ENCODE measurements at regions of chr14 and their contacts with region 1.

Region 1: DNA sequence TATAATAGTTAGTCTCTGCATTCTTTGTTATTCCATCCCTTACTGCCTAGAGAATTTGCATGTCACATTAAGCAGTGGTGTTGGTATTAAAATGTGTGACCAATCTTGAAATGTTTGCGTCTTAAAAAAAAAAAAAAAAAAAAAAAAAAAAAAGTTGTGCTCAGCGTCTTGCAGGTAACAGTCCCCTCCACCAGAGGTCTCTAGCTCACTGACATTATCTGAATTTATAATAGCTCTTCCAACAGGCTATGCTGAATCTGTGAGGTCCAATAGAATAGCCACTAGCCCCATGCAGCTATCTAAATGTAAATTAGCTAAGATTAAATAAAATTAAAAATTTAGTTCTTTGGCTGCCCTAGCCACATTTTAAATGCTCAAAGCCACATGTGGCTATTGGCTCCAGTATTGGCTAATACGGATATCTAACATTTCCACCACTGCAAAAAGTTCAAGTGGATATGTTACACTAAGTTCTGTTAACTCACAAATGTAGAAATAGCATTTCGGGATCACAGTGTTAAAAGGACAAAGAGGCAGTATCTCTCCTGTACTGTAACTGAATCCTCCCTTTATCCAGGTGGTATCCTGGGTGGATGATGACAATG is 28.7 kb downstream of the NKX2-8 start:
- DNase-seq: peak; percentile 65
- ATAC-seq: peak; percentile 79
- H3K4me3 ChIP-seq: no peak overlapping the region
- H3K27ac ChIP-seq: no peak overlapping the region
- H3K4me1 ChIP-seq: peaks cover 9% of the 10 kb centered on the region
- H3K27me3 ChIP-seq: peaks cover 0 to 15% of the 10 kb centered on the region in 2 experiments; a peak in 2 of 5 replicates
- CTCF ChIP-seq: peak; percentile 72
- EP300 ChIP-seq: no peak
- POLR2A ChIP-seq: no peak
- RAD21 ChIP-seq: peak; percentile 55

Region 2: DNA sequence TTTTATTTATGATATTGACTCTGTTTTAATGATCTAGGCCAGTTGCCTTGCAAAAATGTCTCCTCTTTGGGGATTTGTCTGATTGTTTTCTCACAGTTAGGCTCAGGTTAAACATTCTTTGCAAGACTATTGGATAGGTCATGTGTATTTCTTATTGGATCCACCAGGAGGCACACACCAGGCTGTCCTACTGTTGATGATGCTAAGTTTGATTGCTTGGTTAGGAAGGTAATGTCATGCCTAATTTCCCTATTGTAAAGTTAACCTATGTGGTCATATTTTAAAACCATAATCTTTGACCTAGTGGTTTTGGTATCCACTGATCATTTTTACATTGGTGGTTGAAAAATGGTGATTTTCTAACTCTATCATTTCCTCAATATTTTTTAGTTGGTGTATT is 590.5 kb before region 1 on chr14:
- CTCF ChIA-PET with region 1: no interaction called
- POLR2A ChIA-PET with region 1: no interaction called
- in situ Hi-C with region 1: no loop called
- intact Hi-C with region 1: loop called (anchors 5 kb)
- DNase-seq: peak; percentile 45
- ATAC-seq: peak; percentile 93
- H3K4me3 ChIP-seq: no peak overlapping the region
- H3K27ac ChIP-seq: no peak overlapping the region
- H3K4me1 ChIP-seq: no peaks in the 10 kb centered on the region
- H3K27me3 ChIP-seq: peaks cover 0 to 3% of the 10 kb centered on the region in 2 experiments; a peak in 1 of 5 replicates
- CTCF ChIP-seq: peak; percentile 48
- EP300 ChIP-seq: no peak
- POLR2A ChIP-seq: no peak
- RAD21 ChIP-seq: no peak

Region 3: GRCh38 chr14:36356862-36357261 is 196.9 kb before region 1 on chr14:
- CTCF ChIA-PET with region 1: no interaction called
- POLR2A ChIA-PET with region 1: no interaction called
- in situ Hi-C with region 1: no loop called
- intact Hi-C with region 1: no loop called
- DNase-seq: no peak
- ATAC-seq: no peak
- H3K4me3 ChIP-seq: no peak overlapping the region
- H3K27ac ChIP-seq: no peak overlapping the region
- H3K4me1 ChIP-seq: no peaks in the 10 kb centered on the region
- H3K27me3 ChIP-seq: no peaks in the 10 kb centered on the region; a peak in 1 of 5 replicates
- CTCF ChIP-seq: no peak
- EP300 ChIP-seq: no peak
- POLR2A ChIP-seq: no peak
- RAD21 ChIP-seq: no peak

Region 4: DNA sequence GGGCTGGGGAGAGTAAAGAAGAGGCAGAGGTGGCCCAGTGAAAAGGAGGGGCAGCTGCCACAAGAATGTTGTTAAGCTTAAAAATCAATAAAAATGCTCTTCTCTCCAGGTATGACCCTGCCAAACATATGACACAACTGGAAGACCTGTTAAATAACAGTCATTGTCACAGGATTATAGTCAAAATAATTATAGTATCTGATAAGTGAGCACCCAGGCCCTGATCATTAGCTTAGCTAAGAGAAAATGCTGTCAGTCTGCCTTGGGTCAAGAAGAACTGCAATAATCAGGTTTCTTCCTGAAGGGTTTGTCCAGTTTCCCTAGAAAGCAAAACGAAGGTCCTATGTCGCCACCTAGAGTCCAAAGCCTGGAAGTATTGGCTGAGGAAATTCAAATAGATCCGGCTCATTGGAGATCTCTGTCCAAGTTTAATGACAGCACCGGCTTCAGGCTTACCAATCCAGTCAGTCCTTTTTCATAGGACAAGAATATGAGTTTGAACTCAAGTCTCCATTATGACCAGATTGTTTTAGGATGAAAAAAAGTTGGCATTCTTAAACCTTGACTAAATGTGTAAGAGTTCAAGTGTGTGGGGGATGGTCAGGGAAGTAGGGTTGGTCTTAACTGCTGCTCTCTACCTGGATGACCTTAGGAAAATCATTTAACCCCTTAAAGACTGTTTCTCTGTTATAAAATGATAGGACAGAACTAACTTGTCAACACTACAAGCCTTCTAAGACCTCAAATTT is 51.2 kb after region 1 on chr14:
- CTCF ChIA-PET with region 1: interaction called, 60 read pairs
- POLR2A ChIA-PET with region 1: no interaction called
- in situ Hi-C with region 1: loop called (anchors 5 kb)
- intact Hi-C with region 1: loop called (anchors 1 kb)
- DNase-seq: peak; percentile 93
- ATAC-seq: peak; percentile 90
- H3K4me3 ChIP-seq: no peak overlapping the region
- H3K27ac ChIP-seq: no peak overlapping the region
- H3K4me1 ChIP-seq: peaks cover 7% of the 10 kb centered on the region; the same call in 1 of the 2 replicates
- H3K27me3 ChIP-seq: 0 out of 5 replicates have a peak, but pooled peaks cover 0 to 7% of the 10 kb centered on the region in 2 experiments
- CTCF ChIP-seq: peak; percentile 95
- EP300 ChIP-seq: no peak
- POLR2A ChIP-seq: no peak
- RAD21 ChIP-seq: peak; percentile 79

Region 5: DNA sequence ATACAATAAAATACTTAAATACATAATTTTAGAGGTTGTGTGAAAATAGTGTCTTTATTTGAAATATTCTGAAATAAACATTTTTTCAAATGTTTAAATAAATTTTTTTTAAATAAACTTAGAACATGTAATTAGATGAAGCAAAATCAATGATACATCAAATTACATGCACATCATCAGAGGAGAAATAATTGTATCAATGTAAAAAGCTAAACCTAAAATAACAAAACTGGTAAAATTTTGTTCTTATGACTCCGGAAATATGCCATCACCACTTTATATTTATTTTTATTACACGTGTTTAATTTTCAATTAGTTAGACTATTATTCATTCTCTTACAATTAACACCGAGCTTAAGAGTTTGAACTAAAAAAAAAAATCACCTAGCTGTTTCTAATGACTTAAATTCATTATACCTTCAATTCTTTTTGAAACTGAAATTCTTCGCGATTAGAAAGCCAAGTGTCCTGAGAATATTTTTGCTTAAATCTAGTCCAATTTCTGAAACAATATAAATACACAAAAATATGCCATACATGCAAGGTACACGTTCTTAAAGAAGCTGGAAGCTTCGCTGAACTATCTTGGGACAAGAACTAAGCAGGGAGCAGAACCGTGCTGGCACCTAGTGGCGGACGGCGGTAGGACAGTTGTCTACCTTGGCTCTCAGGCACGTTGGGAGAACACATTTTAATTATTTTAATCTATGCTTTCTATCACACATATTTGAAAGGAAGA is 388.2 kb after region 1 on chr14:
- CTCF ChIA-PET with region 1: interaction called, 18 read pairs
- POLR2A ChIA-PET with region 1: no interaction called
- in situ Hi-C with region 1: loop called (anchors 10 kb)
- intact Hi-C with region 1: loop called (anchors 1 kb)
- DNase-seq: peak; percentile 62
- ATAC-seq: peak; percentile 98
- H3K4me3 ChIP-seq: no peak overlapping the region
- H3K27ac ChIP-seq: no peak overlapping the region
- H3K4me1 ChIP-seq: no peaks in the 10 kb centered on the region
- H3K27me3 ChIP-seq: no peaks in the 10 kb centered on the region
- CTCF ChIP-seq: peak; percentile 97
- EP300 ChIP-seq: no peak
- POLR2A ChIP-seq: no peak
- RAD21 ChIP-seq: peak; percentile 84

Measured in HepG2 (cell line).